ENCODE measurements at regions of chr17 and their contacts with region 1.

Region 1: GRCh38 chr17:81018044-81018802 is 16.7 kb upstream of the BAIAP2 start:
- DNase-seq: peak in 4 of 5 donors; percentile 39 to 49 (median 44)
- H3K4me3 ChIP-seq: peak overlapping the region; percentile 20 to 54
- H3K4me3 Mint-ChIP-seq: peak overlapping the region; percentile 82 to 95 (median 86)
- H3K27ac ChIP-seq: peak overlapping the region; percentile 69
- H3K27ac Mint-ChIP-seq: peak overlapping the region; percentile 80 to 98 (median 95)
- H3K4me1 ChIP-seq: peaks cover 32% of the 10 kb centered on the region
- H3K4me1 Mint-ChIP-seq: peaks cover 15 to 52% (median 29%) of the 10 kb centered on the region in 4 donors
- H3K27me3 ChIP-seq: no peaks in the 10 kb centered on the region
- H3K27me3 Mint-ChIP-seq: no peaks in the 10 kb centered on the region

Region 2: GRCh38 chr17:80991645-80992076 is 26.6 kb before region 1 on chr17 and contains the start of gene CHMP6:
- CTCF ChIA-PET with region 1: interaction called, 11 read pairs
- POLR2A ChIA-PET with region 1: interaction called, 25 read pairs
- intact Hi-C with region 1: loop called (anchors 2 kb)
- DNase-seq: peak; percentile 69 to 82 (median 78)
- H3K4me3 ChIP-seq: peak within 1 kb of the TSS; percentile 52 to 63
- H3K4me3 Mint-ChIP-seq: peak within 1 kb of the TSS; percentile 79 to 86 (median 84)
- H3K27ac ChIP-seq: peak within 1 kb of the TSS; percentile 70
- H3K27ac Mint-ChIP-seq: peak within 1 kb of the TSS; percentile 66 to 91 (median 86)
- H3K4me1 ChIP-seq: peaks cover 33% of the 10 kb centered on the region
- H3K4me1 Mint-ChIP-seq: peaks cover 9 to 34% (median 21%) of the 10 kb centered on the region in 4 donors
- H3K27me3 ChIP-seq: no peaks in the 10 kb centered on the region
- H3K27me3 Mint-ChIP-seq: peaks cover 0 to 1% of the 10 kb centered on the region in 2 donors
- total RNA-seq, gene CHMP6: 41.4 to 42.3 TPM

Region 3: GRCh38 chr17:81003711-81004475 is 14.3 kb before region 1 on chr17:
- CTCF ChIA-PET with region 1: interaction called, 8 read pairs
- POLR2A ChIA-PET with region 1: interaction called, 12 read pairs
- intact Hi-C with region 1: no loop called
- DNase-seq: no peak
- H3K4me3 ChIP-seq: no peak overlapping the region
- H3K4me3 Mint-ChIP-seq: peak overlapping the region in 3 of 8 donors; percentile 63 to 70 (median 66)
- H3K27ac ChIP-seq: no peak overlapping the region
- H3K27ac Mint-ChIP-seq: no peak overlapping the region
- H3K4me1 ChIP-seq: peaks cover 13% of the 10 kb centered on the region
- H3K4me1 Mint-ChIP-seq: peaks cover 11 to 31% (median 14%) of the 10 kb centered on the region in 4 donors
- H3K27me3 ChIP-seq: peaks cover 6% of the 10 kb centered on the region
- H3K27me3 Mint-ChIP-seq: peaks cover 10 to 12% of the 10 kb centered on the region in 2 donors

Region 4: DNA sequence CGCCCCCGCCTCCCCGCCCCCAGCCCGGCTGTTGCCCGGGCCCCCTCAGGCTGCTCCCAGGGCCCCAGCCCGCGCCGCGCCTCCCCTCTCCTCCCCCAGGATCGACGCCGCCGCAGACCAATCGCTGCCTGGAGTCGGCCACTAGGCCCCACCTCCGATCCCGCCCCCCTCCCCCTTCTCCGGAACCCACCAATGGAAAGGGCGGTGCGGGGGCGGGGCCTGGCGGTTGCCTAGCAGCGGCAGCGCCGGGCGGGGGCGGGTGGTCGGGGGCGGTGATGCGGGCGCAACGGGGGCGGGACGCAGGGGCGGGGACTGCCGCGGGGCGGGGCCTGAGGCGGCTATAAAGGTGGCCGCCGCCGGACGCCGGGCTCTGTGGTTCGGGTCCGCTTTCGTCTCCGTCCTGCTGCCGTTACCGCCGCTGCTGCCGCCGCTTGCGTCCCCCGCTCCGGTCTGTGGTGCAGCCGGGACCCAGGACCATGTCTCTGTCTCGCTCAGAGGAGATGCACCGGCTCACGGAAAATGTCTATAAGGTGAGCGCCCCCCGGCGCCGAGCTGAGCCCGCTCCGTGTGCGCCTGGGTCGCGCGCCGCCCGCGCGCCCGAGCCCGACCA is 16.7 kb after region 1 on chr17 and contains the start of gene BAIAP2:
- CTCF ChIA-PET with region 1: interaction called, 26 read pairs
- POLR2A ChIA-PET with region 1: interaction called, 29 read pairs
- intact Hi-C with region 1: loop called (anchors 1 kb)
- DNase-seq: peak; percentile 93
- H3K4me3 ChIP-seq: peak within 1 kb of the TSS in 1 of 2 donors; percentile 49
- H3K4me3 Mint-ChIP-seq: peak within 1 kb of the TSS; percentile 88 to 95 (median 92)
- H3K27ac ChIP-seq: no peak within 1 kb of the TSS
- H3K27ac Mint-ChIP-seq: peak within 1 kb of the TSS; percentile 86 to 93 (median 89)
- H3K4me1 ChIP-seq: peaks cover 20% of the 10 kb centered on the region
- H3K4me1 Mint-ChIP-seq: peaks cover 8 to 30% (median 14%) of the 10 kb centered on the region in 4 donors
- H3K27me3 ChIP-seq: no peaks in the 10 kb centered on the region
- H3K27me3 Mint-ChIP-seq: peaks cover 0 to 13% of the 10 kb centered on the region in 2 donors
- total RNA-seq, gene BAIAP2: 5.4 to 7.2 TPM

Measured in CD4-positive, alpha-beta memory T cell (primary cell).